Activated B cell treated with CpG ODN at 0.5 μM for 24 hours (primary cell): ENCODE measurements at regions of chr16 and their contacts with region 1.

Region 1: GRCh38 chr16:47037746-47038458 is 64.4 kb upstream of the DNAJA2 start:
- DNase-seq: peak; percentile 94
- ATAC-seq: peak; percentile 96
- H3K4me3 Mint-ChIP-seq: peak overlapping the region; percentile 81
- H3K27ac Mint-ChIP-seq: no peak overlapping the region
- H3K4me1 Mint-ChIP-seq: peaks cover 19% of the 10 kb centered on the region
- H3K27me3 Mint-ChIP-seq: peaks cover 2% of the 10 kb centered on the region
- CTCF ChIP-seq: peak; percentile 99

Region 2: GRCh38 chr16:46947900-46948547 is 89.9 kb before region 1 on chr16:
- CTCF ChIA-PET with region 1: interaction called, 6 read pairs
- POLR2A ChIA-PET with region 1: no interaction called
- intact Hi-C with region 1: loop called (anchors 2 kb)
- DNase-seq: no peak
- ATAC-seq: peak; percentile 74
- H3K4me3 Mint-ChIP-seq: no peak overlapping the region
- H3K27ac Mint-ChIP-seq: no peak overlapping the region
- H3K4me1 Mint-ChIP-seq: peaks cover 7% of the 10 kb centered on the region
- H3K27me3 Mint-ChIP-seq: no peaks in the 10 kb centered on the region
- CTCF ChIP-seq: no peak

Region 3: GRCh38 chr16:46982335-46982734 is 55.6 kb before region 1 on chr16:
- CTCF ChIA-PET with region 1: interaction called, 3 read pairs
- POLR2A ChIA-PET with region 1: interaction called, 13 read pairs
- intact Hi-C with region 1: no loop called
- DNase-seq: no peak
- ATAC-seq: peak; percentile 54
- H3K4me3 Mint-ChIP-seq: no peak overlapping the region
- H3K27ac Mint-ChIP-seq: no peak overlapping the region
- H3K4me1 Mint-ChIP-seq: no peaks in the 10 kb centered on the region
- H3K27me3 Mint-ChIP-seq: no peaks in the 10 kb centered on the region
- CTCF ChIP-seq: no peak

Region 4: DNA sequence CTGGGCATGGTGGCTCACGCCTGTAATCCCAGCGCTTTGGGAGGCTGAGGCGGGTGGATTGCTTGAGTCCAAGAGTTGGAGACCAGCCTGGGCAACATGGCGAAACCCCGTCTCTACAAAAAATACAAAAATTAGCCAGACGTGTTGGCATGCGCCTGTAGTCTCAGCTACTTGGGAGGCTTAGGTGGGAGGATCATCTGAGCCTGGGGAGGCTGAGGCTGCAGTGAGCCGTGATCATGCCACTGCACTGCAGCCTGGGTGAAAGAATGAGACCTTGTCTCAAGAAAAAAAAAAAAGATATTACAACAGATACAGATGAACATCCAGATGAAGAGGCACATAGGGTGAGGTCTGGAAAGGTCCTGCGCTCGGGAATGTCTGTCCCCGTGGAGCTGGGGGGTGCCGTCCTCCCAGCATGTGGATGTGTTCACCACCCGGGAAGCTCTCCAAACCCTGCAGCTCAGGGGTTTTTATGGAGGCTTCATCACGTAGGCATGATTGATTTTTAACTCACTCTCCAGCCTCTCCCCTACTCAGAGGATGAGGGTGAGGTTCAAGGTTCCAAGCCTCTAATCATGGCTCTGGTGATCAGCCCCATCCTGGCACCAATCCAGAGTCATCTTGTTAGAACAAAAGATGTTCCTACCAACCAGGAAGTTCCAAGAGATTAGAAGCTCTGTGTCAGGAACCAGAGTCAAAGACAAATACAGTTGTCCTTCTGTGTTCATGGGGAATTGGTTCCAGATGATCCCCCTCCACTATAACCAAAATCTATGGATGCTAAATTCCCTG is 20.6 kb after region 1 on chr16:
- CTCF ChIA-PET with region 1: no interaction called
- POLR2A ChIA-PET with region 1: no interaction called
- intact Hi-C with region 1: no loop called
- DNase-seq: no peak
- ATAC-seq: no peak
- H3K4me3 Mint-ChIP-seq: no peak overlapping the region
- H3K27ac Mint-ChIP-seq: no peak overlapping the region
- H3K4me1 Mint-ChIP-seq: no peaks in the 10 kb centered on the region
- H3K27me3 Mint-ChIP-seq: no peaks in the 10 kb centered on the region
- CTCF ChIP-seq: no peak

Region 5: GRCh38 chr16:47162670-47163420 is 124.9 kb after region 1 on chr16:
- CTCF ChIA-PET with region 1: no interaction called
- POLR2A ChIA-PET with region 1: no interaction called
- intact Hi-C with region 1: loop called (anchors 5 kb)
- DNase-seq: no peak
- ATAC-seq: no peak
- H3K4me3 Mint-ChIP-seq: no peak overlapping the region
- H3K27ac Mint-ChIP-seq: no peak overlapping the region
- H3K4me1 Mint-ChIP-seq: no peaks in the 10 kb centered on the region
- H3K27me3 Mint-ChIP-seq: no peaks in the 10 kb centered on the region
- CTCF ChIP-seq: no peak

Region 6: GRCh38 chr16:48156790-48157209 is 1118.9 kb after region 1 on chr16:
- CTCF ChIA-PET with region 1: interaction called, 10 read pairs
- POLR2A ChIA-PET with region 1: no interaction called
- intact Hi-C with region 1: loop called (anchors 1 kb)
- DNase-seq: peak; percentile 77
- ATAC-seq: peak; percentile 54
- H3K4me3 Mint-ChIP-seq: no peak overlapping the region
- H3K27ac Mint-ChIP-seq: no peak overlapping the region
- H3K4me1 Mint-ChIP-seq: peaks cover 6% of the 10 kb centered on the region
- H3K27me3 Mint-ChIP-seq: peaks cover 8% of the 10 kb centered on the region
- CTCF ChIP-seq: peak; percentile 68

Region 7: DNA sequence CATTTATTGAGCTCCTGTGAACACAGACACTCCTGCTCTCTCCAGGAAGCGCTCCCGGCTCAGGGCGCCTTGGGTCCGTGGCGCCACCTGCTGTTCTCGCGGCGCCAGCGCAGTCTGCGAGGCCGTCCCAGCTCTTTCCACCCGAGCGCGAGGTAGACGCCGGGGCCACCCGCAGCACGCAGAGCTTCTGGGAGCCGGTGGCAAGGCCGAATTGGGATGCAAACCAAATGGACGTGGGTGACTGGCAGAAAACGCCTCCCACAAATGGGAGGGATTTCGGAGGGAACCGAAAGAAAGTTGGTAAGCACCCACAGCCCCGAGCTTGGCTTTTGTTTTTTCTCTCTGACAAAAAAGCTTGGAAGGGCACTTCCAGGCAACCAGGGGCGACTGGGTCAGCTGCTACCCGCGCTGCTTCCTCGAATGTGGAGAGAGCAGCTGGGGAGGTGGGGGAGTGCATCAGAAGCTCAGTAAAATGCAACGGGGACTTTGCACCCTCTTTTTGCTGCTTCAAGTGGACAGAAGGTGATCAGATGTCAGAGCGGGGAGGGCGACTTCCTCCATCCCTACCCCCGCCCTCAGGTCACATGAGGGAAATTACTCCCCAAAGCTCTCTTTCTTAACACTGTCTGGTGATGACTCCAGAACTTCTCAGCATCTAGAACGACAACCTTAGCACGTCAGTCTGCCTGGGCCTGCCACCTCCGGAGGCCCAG is 1585.6 kb after region 1 on chr16:
- CTCF ChIA-PET with region 1: interaction called, 3 read pairs
- POLR2A ChIA-PET with region 1: no interaction called
- intact Hi-C with region 1: loop called (anchors 10 kb)
- DNase-seq: peak; percentile 78
- ATAC-seq: peak; percentile 98
- H3K4me3 Mint-ChIP-seq: peak overlapping the region; percentile 82
- H3K27ac Mint-ChIP-seq: no peak overlapping the region
- H3K4me1 Mint-ChIP-seq: peaks cover 24% of the 10 kb centered on the region
- H3K27me3 Mint-ChIP-seq: peaks cover 3% of the 10 kb centered on the region
- CTCF ChIP-seq: peak; percentile 97